AG04449 (cell line): ENCODE measurements at regions of chr10 and their contacts with region 1.

Region 1: GRCh38 chr10:68963151-68963550 is 7.2 kb downstream of the DDX21 start:
- DNase-seq: no peak
- H3K4me3 ChIP-seq: no peak overlapping the region
- CTCF ChIP-seq: no peak

Region 2: DNA sequence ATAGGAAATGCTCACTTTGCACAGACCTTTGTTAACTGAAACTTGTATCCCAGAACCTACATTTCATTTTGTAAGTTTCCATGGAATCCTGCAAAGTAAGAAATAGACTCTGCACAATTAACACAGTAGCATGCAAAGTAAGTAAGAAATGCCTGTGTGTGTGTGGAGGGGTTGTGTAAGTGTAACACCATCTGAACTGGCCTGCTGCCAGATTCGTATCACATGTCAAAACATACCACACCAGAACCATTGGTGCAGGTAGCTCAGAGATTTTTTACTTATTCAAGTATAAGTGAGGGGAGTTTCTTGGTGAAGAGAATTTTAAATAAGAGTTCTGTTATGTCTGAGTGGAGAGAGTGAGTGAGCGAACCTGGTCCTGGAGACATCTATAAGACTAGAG is 25.0 kb before region 1 on chr10:
- CTCF ChIA-PET with region 1: no interaction called
- POLR2A ChIA-PET with region 1: no interaction called
- DNase-seq: no peak
- H3K4me3 ChIP-seq: no peak overlapping the region
- CTCF ChIP-seq: no peak

Region 3: GRCh38 chr10:68981074-68981473 is 17.9 kb after region 1 on chr10:
- CTCF ChIA-PET with region 1: interaction called, 12 read pairs
- POLR2A ChIA-PET with region 1: no interaction called
- DNase-seq: no peak
- H3K4me3 ChIP-seq: no peak overlapping the region
- CTCF ChIP-seq: no peak